GM10248 (cell line): ENCODE measurements at regions of chr2 and their contacts with region 1.

Region 1: DNA sequence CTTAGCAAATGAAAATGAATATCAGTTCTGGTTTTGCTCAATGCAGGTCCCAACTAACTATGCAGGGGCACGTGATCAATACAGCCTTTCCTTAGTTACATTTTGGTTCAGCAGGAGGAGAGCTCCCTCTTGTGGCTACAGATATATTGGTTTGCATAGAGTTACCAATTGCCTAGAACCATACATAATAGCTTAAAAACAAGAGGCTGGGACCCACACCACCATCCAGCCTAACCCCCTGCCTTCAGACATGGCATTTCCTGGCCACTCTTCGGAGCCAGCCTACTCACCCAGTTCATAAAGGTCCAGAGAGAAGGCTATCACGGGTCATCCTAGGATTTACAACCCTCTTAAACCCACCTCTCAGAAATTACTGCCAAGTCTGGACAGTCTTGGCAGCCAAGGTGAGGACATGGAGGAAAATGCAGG is 10.5 kb downstream of the CCDC93 start:
- DNase-seq: peak; percentile 69
- CTCF ChIP-seq: peak; percentile 82

Region 2: GRCh38 chr2:117555965-117556364 is 447.4 kb before region 1 on chr2:
- CTCF ChIA-PET with region 1: no interaction called
- POLR2A ChIA-PET with region 1: no interaction called
- DNase-seq: no peak
- CTCF ChIP-seq: no peak

Region 3: DNA sequence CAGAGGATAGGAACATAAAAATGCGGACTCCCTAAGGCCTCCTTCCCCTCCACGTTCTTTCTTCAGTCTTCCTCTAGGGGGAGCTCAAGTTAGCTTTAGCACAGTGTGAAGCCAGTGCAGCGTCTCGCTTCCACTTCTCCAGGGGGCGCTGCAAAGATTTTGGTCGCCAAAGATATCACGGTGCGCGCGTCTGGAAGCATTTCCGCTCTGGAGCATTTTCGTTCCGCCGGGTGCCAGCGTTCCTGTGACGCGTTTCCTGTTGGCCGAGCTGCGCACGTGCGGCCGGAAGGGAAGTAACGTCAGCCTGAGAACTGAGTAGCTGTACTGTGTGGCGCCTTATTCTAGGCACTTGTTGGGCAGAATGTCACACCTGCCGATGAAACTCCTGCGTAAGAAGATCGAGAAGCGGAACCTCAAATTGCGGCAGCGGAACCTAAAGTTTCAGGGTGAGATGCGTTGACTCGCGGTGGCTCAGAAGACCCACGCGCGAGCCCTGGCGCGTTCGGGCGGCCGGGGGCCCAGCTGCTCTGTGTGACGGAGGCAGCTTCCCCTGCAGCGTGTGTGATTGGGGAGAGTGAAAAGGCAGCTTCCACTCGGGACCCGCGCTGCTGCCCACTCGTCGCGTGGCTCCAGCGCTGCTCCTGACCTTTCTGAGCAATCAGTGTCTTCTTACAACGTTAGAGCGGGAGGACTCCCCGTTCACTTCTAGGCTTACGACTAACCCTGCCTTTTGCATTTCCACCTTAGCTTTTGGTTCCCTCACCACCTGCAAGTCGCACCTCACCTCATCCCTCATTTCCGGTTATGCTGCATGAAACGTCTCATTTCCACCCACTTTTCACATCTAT is 188.8 kb before region 1 on chr2 and contains the start of gene DDX18:
- CTCF ChIA-PET with region 1: interaction called, 127 read pairs
- POLR2A ChIA-PET with region 1: interaction called, 3 read pairs
- DNase-seq: peak; percentile 87
- CTCF ChIP-seq: peak; percentile 99

Region 4: DNA sequence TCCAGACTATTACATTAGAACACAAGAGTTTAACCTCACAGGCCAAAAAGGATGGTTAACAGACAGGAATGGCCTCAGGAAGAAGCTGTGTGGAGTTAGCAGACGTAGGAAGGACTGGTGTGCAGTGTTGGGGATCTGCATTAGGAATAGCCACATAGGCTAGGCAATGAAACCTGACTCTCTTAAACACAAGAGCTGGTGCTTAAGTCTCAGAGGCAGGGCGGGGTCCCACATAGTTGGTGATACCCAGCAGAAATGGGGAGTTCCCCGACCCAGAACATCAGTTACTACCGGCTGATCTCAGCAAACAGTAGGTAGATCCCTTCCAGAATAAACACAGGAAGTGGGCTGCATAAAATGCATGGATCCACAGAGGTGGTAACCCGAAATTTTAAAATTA is 53.6 kb before region 1 on chr2:
- CTCF ChIA-PET with region 1: interaction called, 25 read pairs
- POLR2A ChIA-PET with region 1: interaction called, 5 read pairs
- DNase-seq: no peak
- CTCF ChIP-seq: no peak

Region 5: GRCh38 chr2:117972425-117973138 is 30.8 kb before region 1 on chr2:
- CTCF ChIA-PET with region 1: interaction called, 23 read pairs
- POLR2A ChIA-PET with region 1: no interaction called
- DNase-seq: no peak
- CTCF ChIP-seq: no peak

Region 6: DNA sequence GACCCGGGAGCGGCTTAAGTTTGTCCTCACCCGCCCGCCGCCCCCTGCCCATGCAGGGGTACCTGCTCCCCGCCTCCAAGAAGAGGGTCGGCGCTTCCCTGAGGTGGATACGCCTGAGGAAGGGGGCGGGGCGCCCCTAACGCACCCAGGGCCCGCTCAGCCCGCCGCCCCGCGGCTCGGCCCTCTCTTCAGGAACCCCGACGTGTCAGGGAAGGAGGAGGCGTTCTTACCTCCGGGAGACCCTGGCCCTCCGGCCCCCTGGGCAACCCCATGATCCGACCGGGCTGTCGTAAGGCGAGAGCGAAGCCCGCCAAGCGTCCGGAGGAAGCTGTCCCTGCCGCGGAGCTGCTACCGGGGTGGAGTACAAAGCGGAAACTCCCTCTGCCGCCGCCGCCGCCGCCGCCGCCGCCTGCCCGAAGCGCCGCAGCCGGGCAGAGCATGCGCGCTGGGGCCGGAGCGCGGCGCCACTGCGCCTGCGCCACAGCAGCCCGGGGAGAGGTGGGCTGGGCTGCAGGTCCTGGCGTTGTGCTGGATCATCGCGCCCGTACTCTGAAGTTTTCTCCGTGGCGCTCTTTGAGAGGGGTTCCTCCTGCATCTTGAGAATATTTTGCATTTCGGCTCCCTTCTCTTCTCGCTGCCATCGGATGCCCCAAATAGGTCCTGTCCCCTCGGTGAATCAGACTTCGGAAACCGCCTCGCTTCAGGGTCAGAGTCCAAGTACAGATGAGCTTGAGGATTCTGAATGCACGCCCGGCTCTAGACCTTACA is 10.5 kb after region 1 on chr2 and contains the start of gene CCDC93:
- CTCF ChIA-PET with region 1: interaction called, 99 read pairs
- POLR2A ChIA-PET with region 1: no interaction called
- DNase-seq: peak; percentile 98
- CTCF ChIP-seq: no peak

Region 7: GRCh38 chr2:118046634-118047210 is 43.3 kb after region 1 on chr2:
- CTCF ChIA-PET with region 1: interaction called, 10 read pairs
- POLR2A ChIA-PET with region 1: no interaction called
- DNase-seq: peak; percentile 34
- CTCF ChIP-seq: peak; percentile 71